ENCODE measurements at regions of chr5 and their contacts with region 1.

Region 1: GRCh38 chr5:96344678-96345577 is 88.1 kb downstream of the PCSK1 start:
- DNase-seq: peak; percentile 86
- ATAC-seq: peak; percentile 94
- H3K4me3 ChIP-seq: no peak overlapping the region
- H3K27ac ChIP-seq: no peak overlapping the region
- H3K4me1 ChIP-seq: 0 out of 2 replicates have a peak, but pooled peaks cover 2% of the 10 kb centered on the region
- H3K27me3 ChIP-seq: no peaks in the 10 kb centered on the region
- CTCF ChIP-seq: peak; percentile 78
- POLR2A ChIP-seq: no peak
- RAD21 ChIP-seq: peak; percentile 93

Region 2: GRCh38 chr5:96595300-96596090 is 250.6 kb after region 1 on chr5:
- CTCF ChIA-PET with region 1: interaction called, 16 read pairs
- POLR2A ChIA-PET with region 1: no interaction called
- dilution Hi-C with region 1: no loop called
- in situ Hi-C with region 1: loop called (anchors 5 kb)
- intact Hi-C with region 1: no loop called
- DNase-seq: no peak
- ATAC-seq: no peak
- H3K4me3 ChIP-seq: no peak overlapping the region
- H3K27ac ChIP-seq: no peak overlapping the region
- H3K4me1 ChIP-seq: no peaks in the 10 kb centered on the region
- H3K27me3 ChIP-seq: no peaks in the 10 kb centered on the region
- CTCF ChIP-seq: peak; percentile 29; the same call in 1 of the 2 replicates
- POLR2A ChIP-seq: no peak
- RAD21 ChIP-seq: peak; percentile 31; the same call in 1 of the 2 replicates

Region 3: GRCh38 chr5:96662725-96663513 is 318.0 kb after region 1 on chr5:
- CTCF ChIA-PET with region 1: no interaction called
- POLR2A ChIA-PET with region 1: no interaction called
- dilution Hi-C with region 1: no loop called
- in situ Hi-C with region 1: no loop called
- intact Hi-C with region 1: loop called (anchors 5 kb)
- DNase-seq: peak; percentile 79
- ATAC-seq: peak; percentile 86
- H3K4me3 ChIP-seq: peak overlapping the region; percentile 92
- H3K27ac ChIP-seq: peak overlapping the region; percentile 90
- H3K4me1 ChIP-seq: peaks cover 1% of the 10 kb centered on the region; the same call in 1 of the 2 replicates
- H3K27me3 ChIP-seq: no peaks in the 10 kb centered on the region
- CTCF ChIP-seq: no peak
- POLR2A ChIP-seq: peak; percentile 58; the same call in 1 of the 2 replicates
- RAD21 ChIP-seq: no peak

Region 4: GRCh38 chr5:96729156-96729555 is 384.2 kb after region 1 on chr5:
- CTCF ChIA-PET with region 1: no interaction called
- POLR2A ChIA-PET with region 1: no interaction called
- dilution Hi-C with region 1: no loop called
- in situ Hi-C with region 1: no loop called
- intact Hi-C with region 1: loop called (anchors 2 kb)
- DNase-seq: no peak
- ATAC-seq: no peak; the same call in 1 of the 2 replicates
- H3K4me3 ChIP-seq: no peak overlapping the region
- H3K27ac ChIP-seq: no peak overlapping the region
- H3K4me1 ChIP-seq: no peaks in the 10 kb centered on the region; the same call in 1 of the 2 replicates
- H3K27me3 ChIP-seq: no peaks in the 10 kb centered on the region
- CTCF ChIP-seq: peak; percentile 35; the same call in 1 of the 2 replicates
- POLR2A ChIP-seq: no peak
- RAD21 ChIP-seq: peak; percentile 46

Measured in IMR-90 (cell line).